H1 (cell line): ENCODE measurements at regions of chr5 and their contacts with region 1.

Region 1: GRCh38 chr5:151264113-151264512 is 11.1 kb downstream of the GM2A start:
- DNase-seq: no peak
- H3K4me3 ChIP-seq: no peak overlapping the region
- H3K27ac ChIP-seq: no peak overlapping the region
- H3K4me1 ChIP-seq: no peaks in the 10 kb centered on the region; a peak in 1 of 7 replicates
- H3K27me3 ChIP-seq: no peaks in the 10 kb centered on the region
- CTCF ChIP-seq: peak in 1 of 3 experiments; percentile 20; a peak in 1 of 4 replicates
- EP300 ChIP-seq: no peak
- POLR2A ChIP-seq: no peak
- RAD21 ChIP-seq: no peak

Region 2: DNA sequence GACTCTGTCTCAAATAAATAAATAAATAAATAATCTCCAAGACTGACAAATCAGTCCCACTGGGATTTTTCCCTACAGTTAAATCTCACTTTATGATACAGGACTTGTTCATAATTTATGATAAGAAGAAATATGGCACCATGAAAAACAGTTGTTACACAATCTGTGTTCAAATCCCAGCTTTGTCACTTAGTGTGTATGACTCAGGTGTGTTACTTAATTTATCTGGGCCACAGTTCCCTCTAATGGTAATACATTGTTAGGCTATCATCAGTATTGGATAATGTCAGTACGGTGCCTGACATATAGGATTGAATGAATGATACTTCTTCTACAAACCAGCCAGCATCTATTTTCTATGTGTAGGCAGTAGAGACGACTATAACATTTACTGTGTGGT is 16.3 kb after region 1 on chr5:
- CTCF ChIA-PET with region 1: interaction called, 25 read pairs
- POLR2A ChIA-PET with region 1: interaction called, 4 read pairs
- DNase-seq: no peak
- H3K4me3 ChIP-seq: no peak overlapping the region
- H3K27ac ChIP-seq: no peak overlapping the region
- H3K4me1 ChIP-seq: no peaks in the 10 kb centered on the region
- H3K27me3 ChIP-seq: no peaks in the 10 kb centered on the region
- CTCF ChIP-seq: no peak
- EP300 ChIP-seq: no peak
- POLR2A ChIP-seq: no peak
- RAD21 ChIP-seq: no peak